Naive thymus-derived CD4-positive, alpha-beta T cell (primary cell): ENCODE measurements at regions of chr15 and their contacts with region 1.

Region 1: GRCh38 chr15:94163999-94164807 is 67.2 kb upstream of the MCTP2 start:
- DNase-seq: peak in 8 of 9 donors; percentile 18 to 53 (median 35)
- ATAC-seq: peak; percentile 77
- H3K4me3 ChIP-seq: no peak overlapping the region
- H3K4me3 Mint-ChIP-seq: no peak overlapping the region
- H3K27ac ChIP-seq: no peak overlapping the region
- H3K27ac Mint-ChIP-seq: no peak overlapping the region
- H3K4me1 ChIP-seq: no peaks in the 10 kb centered on the region
- H3K4me1 Mint-ChIP-seq: peaks cover 0 to 9% (median 0%) of the 10 kb centered on the region in 7 donors
- H3K27me3 ChIP-seq: no peaks in the 10 kb centered on the region
- H3K27me3 Mint-ChIP-seq: peaks cover 0 to 30% (median 4%) of the 10 kb centered on the region in 5 donors

Region 2: DNA sequence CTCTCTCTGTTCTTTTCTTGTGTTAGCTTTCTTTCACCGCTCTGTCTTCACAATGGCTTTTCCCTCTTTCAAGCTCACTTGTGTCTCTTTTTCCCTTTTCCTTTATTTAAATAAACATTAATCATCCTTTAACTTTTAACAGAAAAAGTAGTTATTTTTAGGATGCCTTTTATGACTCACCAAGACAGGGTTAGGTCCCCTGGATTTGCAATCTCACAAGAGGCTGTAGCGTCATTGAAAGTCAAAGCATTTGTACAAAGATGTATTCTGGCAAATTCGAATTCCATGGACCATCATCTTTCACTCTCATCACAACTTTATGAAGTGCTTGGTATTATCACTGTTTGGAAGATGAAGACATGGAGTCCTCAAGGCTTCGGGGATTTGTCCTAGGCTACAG is 32.3 kb after region 1 on chr15:
- CTCF ChIA-PET with region 1: no interaction called
- POLR2A ChIA-PET with region 1: no interaction called
- intact Hi-C with region 1: no loop called
- DNase-seq: no peak
- ATAC-seq: no peak
- H3K4me3 ChIP-seq: no peak overlapping the region
- H3K4me3 Mint-ChIP-seq: no peak overlapping the region
- H3K27ac ChIP-seq: no peak overlapping the region
- H3K27ac Mint-ChIP-seq: no peak overlapping the region
- H3K4me1 ChIP-seq: no peaks in the 10 kb centered on the region
- H3K4me1 Mint-ChIP-seq: no peaks in the 10 kb centered on the region
- H3K27me3 ChIP-seq: no peaks in the 10 kb centered on the region
- H3K27me3 Mint-ChIP-seq: peaks cover 0 to 20% (median 0%) of the 10 kb centered on the region in 5 donors

Region 3: GRCh38 chr15:94412979-94413746 is 249.0 kb after region 1 on chr15:
- CTCF ChIA-PET with region 1: no interaction called
- POLR2A ChIA-PET with region 1: no interaction called
- intact Hi-C with region 1: loop called in 1 of 2 experiments (anchors 5 kb)
- DNase-seq: no peak
- ATAC-seq: no peak
- H3K4me3 ChIP-seq: no peak overlapping the region
- H3K4me3 Mint-ChIP-seq: no peak overlapping the region
- H3K27ac ChIP-seq: no peak overlapping the region
- H3K27ac Mint-ChIP-seq: no peak overlapping the region
- H3K4me1 ChIP-seq: no peaks in the 10 kb centered on the region
- H3K4me1 Mint-ChIP-seq: peaks cover 0 to 4% (median 0%) of the 10 kb centered on the region in 7 donors
- H3K27me3 ChIP-seq: no peaks in the 10 kb centered on the region
- H3K27me3 Mint-ChIP-seq: no peaks in the 10 kb centered on the region

Region 4: DNA sequence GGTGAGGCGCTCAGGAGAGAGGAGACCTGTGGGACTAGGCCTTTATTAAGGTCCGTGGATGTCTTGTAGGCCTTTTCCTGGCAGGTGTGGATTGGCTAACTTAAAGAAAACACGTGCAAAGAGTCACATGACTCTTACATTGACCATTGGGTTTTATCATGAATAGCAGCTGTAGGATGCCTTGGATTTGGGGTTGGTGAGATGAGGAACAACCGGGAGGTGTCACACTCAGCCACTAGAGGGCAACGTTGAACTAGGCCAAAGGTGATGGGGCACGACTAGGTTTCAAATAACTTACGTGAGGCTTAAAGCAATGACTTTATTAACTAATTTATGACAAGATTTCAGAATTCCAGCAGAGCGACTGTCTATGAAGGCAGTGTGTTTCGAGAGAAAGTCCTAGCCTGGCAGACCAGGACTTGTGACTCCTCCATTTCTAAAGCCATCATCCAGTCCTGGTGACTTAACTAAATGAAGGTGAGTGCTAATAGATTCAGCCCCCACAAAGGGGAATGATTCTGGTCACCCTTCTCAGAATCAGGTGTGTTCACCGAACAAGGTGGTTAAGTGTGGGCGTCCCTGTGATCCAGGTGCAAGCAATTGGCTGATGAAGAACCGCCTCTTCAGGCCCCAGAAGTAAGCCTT is 412.8 kb after region 1 on chr15:
- CTCF ChIA-PET with region 1: no interaction called
- POLR2A ChIA-PET with region 1: no interaction called
- intact Hi-C with region 1: loop called in 1 of 2 experiments (anchors 2 kb)
- DNase-seq: peak in 5 of 9 donors; percentile 7 to 43 (median 13)
- ATAC-seq: peak; percentile 59
- H3K4me3 ChIP-seq: no peak overlapping the region
- H3K4me3 Mint-ChIP-seq: no peak overlapping the region
- H3K27ac ChIP-seq: no peak overlapping the region
- H3K27ac Mint-ChIP-seq: no peak overlapping the region
- H3K4me1 ChIP-seq: no peaks in the 10 kb centered on the region
- H3K4me1 Mint-ChIP-seq: peaks cover 8 to 19% (median 10%) of the 10 kb centered on the region in 7 donors
- H3K27me3 ChIP-seq: peaks cover 0 to 6% of the 10 kb centered on the region in 2 donors
- H3K27me3 Mint-ChIP-seq: peaks cover 52 to 72% (median 65%) of the 10 kb centered on the region in 5 donors